ENCODE measurements at regions of chr12 and their contacts with region 1.

Region 1: GRCh38 chr12:48716493-48717251 is at the start of gene CCNT1:
- DNase-seq: peak; percentile 100
- H3K4me3 Mint-ChIP-seq: peak within 1 kb of the TSS; percentile 90
- H3K27ac Mint-ChIP-seq: peak within 1 kb of the TSS; percentile 99
- H3K4me1 Mint-ChIP-seq: peaks cover 39% of the 10 kb centered on the region
- H3K27me3 Mint-ChIP-seq: no peaks in the 10 kb centered on the region
- total RNA-seq, gene CCNT1: 73.8 to 77.0 TPM

Region 2: GRCh38 chr12:47397664-47398281 is 1318.9 kb before region 1 on chr12:
- CTCF ChIA-PET with region 1: no interaction called
- intact Hi-C with region 1: no loop called
- DNase-seq: peak; percentile 72
- H3K4me3 Mint-ChIP-seq: peak overlapping the region; percentile 33
- H3K27ac Mint-ChIP-seq: peak overlapping the region; percentile 100
- H3K4me1 Mint-ChIP-seq: peaks cover 95% of the 10 kb centered on the region
- H3K27me3 Mint-ChIP-seq: no peaks in the 10 kb centered on the region

Region 3: GRCh38 chr12:48157018-48157888 is 559.4 kb before region 1 on chr12 and contains the start of gene ASB8:
- CTCF ChIA-PET with region 1: no interaction called
- intact Hi-C with region 1: loop called (anchors 1 kb)
- DNase-seq: peak; percentile 100
- H3K4me3 Mint-ChIP-seq: peak within 1 kb of the TSS; percentile 93
- H3K27ac Mint-ChIP-seq: peak within 1 kb of the TSS; percentile 96
- H3K4me1 Mint-ChIP-seq: peaks cover 47% of the 10 kb centered on the region
- H3K27me3 Mint-ChIP-seq: no peaks in the 10 kb centered on the region
- total RNA-seq, gene ASB8: 36.7 to 47.9 TPM

Region 4: GRCh38 chr12:48512855-48513254 is 203.8 kb before region 1 on chr12:
- CTCF ChIA-PET with region 1: no interaction called
- intact Hi-C with region 1: loop called (anchors 2 kb)
- DNase-seq: peak; percentile 61
- H3K4me3 Mint-ChIP-seq: peak overlapping the region; percentile 6
- H3K27ac Mint-ChIP-seq: peak overlapping the region; percentile 74
- H3K4me1 Mint-ChIP-seq: peaks cover 27% of the 10 kb centered on the region
- H3K27me3 Mint-ChIP-seq: no peaks in the 10 kb centered on the region

Region 5: DNA sequence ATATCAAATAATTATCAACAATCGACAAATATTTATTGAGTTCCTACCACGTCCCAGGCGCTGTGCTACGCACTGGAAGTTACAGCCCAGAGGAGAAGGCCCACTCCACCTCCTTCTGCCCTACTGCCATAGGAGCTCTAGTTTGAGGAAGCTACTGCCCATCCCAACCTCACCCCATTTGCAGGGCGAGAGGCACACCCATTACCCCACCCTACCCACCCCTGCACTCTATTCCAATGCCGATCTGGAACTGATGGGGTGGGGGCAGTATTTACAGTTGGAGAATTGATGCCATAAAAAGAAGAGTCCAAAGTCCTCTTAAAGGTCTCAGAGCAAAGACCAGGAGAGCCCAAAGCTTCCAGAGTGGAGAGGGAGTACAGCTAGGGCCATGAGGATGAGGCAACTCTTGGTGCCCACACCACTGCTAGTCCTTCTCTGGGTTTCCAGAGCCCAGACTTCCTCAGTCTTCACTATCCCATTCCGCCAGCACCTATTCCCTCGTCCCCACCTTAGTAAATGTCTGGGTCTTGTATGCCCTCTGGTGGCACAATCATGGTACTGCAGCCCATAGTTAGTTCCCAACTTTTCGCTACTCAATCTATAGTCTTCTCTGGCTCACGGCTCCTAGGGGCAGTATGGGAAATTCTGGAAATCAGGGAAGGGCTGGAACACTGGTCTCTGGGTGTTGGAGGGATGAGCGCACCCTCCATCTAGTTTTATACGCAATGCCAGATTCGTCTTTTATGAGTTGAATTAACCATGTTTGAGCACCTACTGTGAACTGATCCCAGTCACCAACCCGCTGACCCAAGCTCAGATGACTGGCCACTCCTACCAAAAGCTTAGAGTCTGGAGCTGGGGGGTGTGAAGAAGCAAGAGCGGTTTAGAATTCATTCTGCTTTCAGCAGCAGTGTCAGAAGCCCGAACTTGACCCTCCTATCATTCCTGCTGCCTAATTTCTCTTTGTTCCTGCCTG is 79.1 kb after region 1 on chr12:
- CTCF ChIA-PET with region 1: no interaction called
- intact Hi-C with region 1: loop called (anchors 2 kb)
- DNase-seq: peak; percentile 74
- H3K4me3 Mint-ChIP-seq: no peak overlapping the region
- H3K27ac Mint-ChIP-seq: no peak overlapping the region
- H3K4me1 Mint-ChIP-seq: no peaks in the 10 kb centered on the region
- H3K27me3 Mint-ChIP-seq: peaks cover 8% of the 10 kb centered on the region

Region 6: DNA sequence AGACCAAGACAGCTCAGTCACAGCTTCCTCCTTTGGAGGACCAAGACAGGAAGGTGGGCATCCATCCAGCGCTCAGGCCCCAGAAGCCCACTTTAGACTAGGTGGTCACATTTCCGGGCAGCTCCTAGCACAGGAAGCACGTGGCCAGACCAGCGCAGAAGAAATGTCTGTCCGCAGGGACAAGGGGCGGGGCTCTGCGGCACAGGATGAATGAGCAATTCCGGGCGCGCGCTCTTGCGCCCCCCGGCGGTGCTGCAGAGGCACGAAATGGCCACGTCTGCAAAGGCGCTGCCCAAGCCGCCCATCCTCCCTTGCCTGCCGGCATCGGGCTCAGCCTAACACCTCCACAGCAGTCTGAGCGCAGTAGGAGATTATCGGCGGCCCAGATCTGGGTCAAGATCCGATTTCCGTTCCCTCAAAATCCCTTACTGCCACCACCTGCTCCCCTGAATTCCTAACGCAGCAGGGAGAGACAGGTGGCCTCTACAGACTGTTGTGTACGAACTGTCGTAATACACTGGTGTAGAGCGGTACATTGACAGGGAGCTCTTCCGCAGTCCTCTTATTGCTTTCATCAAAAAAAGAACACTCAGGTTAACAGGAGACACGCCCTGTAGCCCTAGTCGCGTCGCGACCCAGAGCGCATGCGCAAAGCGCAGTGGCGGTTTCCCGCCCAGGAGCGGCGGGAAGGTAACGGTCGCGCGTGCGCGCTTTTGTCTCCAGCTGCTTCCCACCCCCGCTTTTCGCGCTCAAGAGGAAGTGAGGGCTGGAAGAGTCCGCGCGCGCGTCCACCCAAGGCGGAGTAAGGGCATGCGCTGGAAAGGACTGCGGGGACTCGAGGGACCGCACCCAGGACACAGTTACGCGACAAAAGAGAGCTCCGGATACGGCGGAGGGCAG is 413.7 kb after region 1 on chr12:
- CTCF ChIA-PET with region 1: no interaction called
- intact Hi-C with region 1: loop called (anchors 10 kb)
- DNase-seq: peak; percentile 96
- H3K4me3 Mint-ChIP-seq: peak overlapping the region; percentile 97
- H3K27ac Mint-ChIP-seq: peak overlapping the region; percentile 100
- H3K4me1 Mint-ChIP-seq: peaks cover 43% of the 10 kb centered on the region
- H3K27me3 Mint-ChIP-seq: no peaks in the 10 kb centered on the region